Naive thymus-derived CD4-positive, alpha-beta T cell (primary cell): ENCODE measurements at regions of chr2 and their contacts with region 1.

Region 1: GRCh38 chr2:197434541-197435513 is at the start of gene SF3B1:
- DNase-seq: peak; percentile 98 to 99 (median 99)
- ATAC-seq: peak; percentile 99
- H3K4me3 ChIP-seq: peak within 1 kb of the TSS; percentile 98
- H3K4me3 Mint-ChIP-seq: peak within 1 kb of the TSS; percentile 88 to 100 (median 98)
- H3K27ac ChIP-seq: peak within 1 kb of the TSS; percentile 98
- H3K27ac Mint-ChIP-seq: peak within 1 kb of the TSS; percentile 100
- H3K4me1 ChIP-seq: peaks cover 28 to 46% of the 10 kb centered on the region in 2 donors
- H3K4me1 Mint-ChIP-seq: peaks cover 34 to 60% (median 49%) of the 10 kb centered on the region in 7 donors
- H3K27me3 ChIP-seq: no peaks in the 10 kb centered on the region
- H3K27me3 Mint-ChIP-seq: peaks cover 0 to 3% (median 0%) of the 10 kb centered on the region in 5 donors
- total RNA-seq, gene SF3B1: 330 to 737 (median 528) TPM

Region 2: GRCh38 chr2:196468394-196468793 is 966.4 kb before region 1 on chr2:
- CTCF ChIA-PET with region 1: no interaction called
- POLR2A ChIA-PET with region 1: no interaction called
- intact Hi-C with region 1: no loop called
- DNase-seq: no peak
- ATAC-seq: no peak
- H3K4me3 ChIP-seq: no peak overlapping the region
- H3K4me3 Mint-ChIP-seq: no peak overlapping the region
- H3K27ac ChIP-seq: no peak overlapping the region
- H3K27ac Mint-ChIP-seq: no peak overlapping the region
- H3K4me1 ChIP-seq: no peaks in the 10 kb centered on the region
- H3K4me1 Mint-ChIP-seq: no peaks in the 10 kb centered on the region
- H3K27me3 ChIP-seq: no peaks in the 10 kb centered on the region
- H3K27me3 Mint-ChIP-seq: peaks cover 12 to 40% (median 22%) of the 10 kb centered on the region in 5 donors

Region 3: GRCh38 chr2:196798980-196799379 is 635.8 kb before region 1 on chr2:
- CTCF ChIA-PET with region 1: no interaction called
- POLR2A ChIA-PET with region 1: no interaction called
- intact Hi-C with region 1: loop called in 1 of 2 experiments (anchors 1 kb)
- DNase-seq: peak in 1 of 9 donors; percentile 1
- ATAC-seq: peak; percentile 1
- H3K4me3 ChIP-seq: peak overlapping the region; percentile 98
- H3K4me3 Mint-ChIP-seq: peak overlapping the region; percentile 85 to 99 (median 96)
- H3K27ac ChIP-seq: peak overlapping the region; percentile 73
- H3K27ac Mint-ChIP-seq: peak overlapping the region; percentile 89 to 99 (median 91)
- H3K4me1 ChIP-seq: peaks cover 4 to 6% of the 10 kb centered on the region in 2 donors
- H3K4me1 Mint-ChIP-seq: peaks cover 17 to 52% (median 38%) of the 10 kb centered on the region in 7 donors
- H3K27me3 ChIP-seq: no peaks in the 10 kb centered on the region
- H3K27me3 Mint-ChIP-seq: peaks cover 0 to 4% (median 4%) of the 10 kb centered on the region in 5 donors

Region 4: DNA sequence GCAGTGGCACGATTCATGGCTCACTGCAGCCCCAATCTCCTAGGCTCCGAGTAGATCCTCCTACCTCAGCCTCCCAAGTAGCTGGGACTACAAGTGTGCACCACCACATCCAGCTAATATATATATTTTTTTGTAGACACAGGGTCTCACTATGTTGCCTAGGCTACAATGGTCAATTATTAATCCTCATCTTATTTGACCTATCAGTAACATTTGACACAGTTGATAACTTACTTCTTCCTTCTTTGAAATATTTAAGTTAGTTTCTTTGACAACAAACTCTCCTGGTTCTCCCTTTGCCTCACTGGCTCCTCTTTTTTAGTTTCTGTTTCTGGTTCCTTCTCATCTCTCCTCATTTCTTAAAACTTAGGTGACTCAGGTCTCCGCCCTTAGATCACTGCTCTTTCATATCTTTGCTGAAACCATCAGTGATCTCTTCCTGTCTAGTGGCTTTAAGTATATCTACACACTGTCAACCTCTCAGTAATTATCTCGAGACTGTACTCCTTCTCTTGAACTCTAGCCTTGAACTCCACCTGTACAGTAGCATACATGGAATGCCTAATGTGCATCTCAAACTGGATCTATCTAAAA is 519.9 kb before region 1 on chr2:
- CTCF ChIA-PET with region 1: no interaction called
- POLR2A ChIA-PET with region 1: no interaction called
- intact Hi-C with region 1: loop called in 1 of 2 experiments (anchors 5 kb)
- DNase-seq: peak in 7 of 9 donors; percentile 39 to 67 (median 54)
- ATAC-seq: peak; percentile 97
- H3K4me3 ChIP-seq: peak overlapping the region; percentile 32
- H3K4me3 Mint-ChIP-seq: peak overlapping the region; percentile 6 to 84 (median 66)
- H3K27ac ChIP-seq: peak overlapping the region; percentile 51
- H3K27ac Mint-ChIP-seq: peak overlapping the region; percentile 75 to 97 (median 87)
- H3K4me1 ChIP-seq: peaks cover 16 to 19% of the 10 kb centered on the region in 2 donors
- H3K4me1 Mint-ChIP-seq: peaks cover 11 to 47% (median 26%) of the 10 kb centered on the region in 7 donors
- H3K27me3 ChIP-seq: no peaks in the 10 kb centered on the region
- H3K27me3 Mint-ChIP-seq: no peaks in the 10 kb centered on the region

Region 5: DNA sequence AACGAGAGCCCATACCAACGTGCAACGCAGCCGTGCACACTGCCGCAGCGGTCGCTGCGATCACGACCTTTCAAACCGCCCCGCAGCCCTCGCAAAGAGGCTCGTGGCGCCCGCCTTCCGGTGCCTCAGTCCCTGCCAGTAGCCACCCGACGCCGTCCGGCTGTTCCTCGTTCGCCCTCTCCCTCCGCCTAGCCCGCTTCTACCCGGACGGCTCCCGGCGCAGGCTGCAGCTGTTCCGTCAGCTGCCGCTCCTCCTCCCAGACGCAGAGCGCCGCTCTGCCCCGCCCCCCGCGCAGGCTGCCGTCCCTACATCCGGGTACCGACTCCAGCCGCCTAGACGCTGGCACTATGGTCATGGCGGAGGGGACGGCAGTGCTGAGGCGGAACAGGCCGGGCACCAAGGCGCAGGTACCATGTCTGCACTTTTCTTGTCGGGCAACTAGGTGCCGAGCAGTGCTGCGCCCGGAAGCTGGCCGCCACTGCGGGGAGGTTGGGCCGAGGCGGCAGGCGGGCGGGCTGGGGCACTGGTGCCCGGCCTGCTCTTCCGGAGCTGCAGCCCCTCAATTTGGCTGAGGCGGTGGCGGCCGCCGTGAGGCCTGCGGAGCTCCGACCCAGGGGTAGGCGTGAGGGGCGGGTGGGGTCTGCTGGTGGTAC is 81.0 kb after region 1 on chr2 and contains the start of gene MOB4:
- CTCF ChIA-PET with region 1: no interaction called
- POLR2A ChIA-PET with region 1: interaction called, 20 read pairs
- intact Hi-C with region 1: loop called (anchors 1 kb)
- DNase-seq: peak; percentile 87 to 98 (median 92)
- ATAC-seq: peak; percentile 97
- H3K4me3 ChIP-seq: peak within 1 kb of the TSS; percentile 75
- H3K4me3 Mint-ChIP-seq: peak within 1 kb of the TSS; percentile 85 to 99 (median 98)
- H3K27ac ChIP-seq: peak within 1 kb of the TSS; percentile 86
- H3K27ac Mint-ChIP-seq: peak within 1 kb of the TSS; percentile 88 to 99 (median 95)
- H3K4me1 ChIP-seq: peaks cover 10 to 12% of the 10 kb centered on the region in 2 donors
- H3K4me1 Mint-ChIP-seq: peaks cover 28 to 49% (median 40%) of the 10 kb centered on the region in 7 donors
- H3K27me3 ChIP-seq: no peaks in the 10 kb centered on the region
- H3K27me3 Mint-ChIP-seq: no peaks in the 10 kb centered on the region
- total RNA-seq, gene MOB4: 16.1 to 22.5 (median 17.9) TPM

Region 6: DNA sequence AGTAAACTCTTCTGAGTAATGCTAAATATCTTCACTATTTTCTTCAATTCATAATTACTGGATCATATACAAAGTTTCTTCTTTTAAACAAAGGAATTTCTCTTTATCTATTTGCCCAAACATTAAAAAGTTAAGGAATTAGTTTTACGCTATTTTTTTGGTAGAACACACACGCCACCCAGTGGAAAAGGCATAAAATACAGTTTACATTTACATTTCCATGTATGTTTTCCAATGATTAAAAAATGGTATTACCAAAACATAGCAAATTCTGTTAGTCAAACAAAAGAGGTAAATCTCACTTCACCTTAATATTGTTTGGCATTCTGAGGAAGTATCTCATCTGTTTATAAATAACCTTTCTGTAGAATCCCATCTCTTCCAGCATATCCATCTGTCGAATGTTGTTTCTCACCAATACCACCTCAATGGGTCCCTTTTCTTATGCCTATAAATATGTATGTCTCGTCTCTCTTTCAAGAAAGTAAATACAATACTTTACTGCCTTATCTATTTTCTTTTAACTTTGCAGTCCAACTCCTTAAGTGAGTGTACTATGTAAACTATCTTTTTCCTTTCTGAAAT is 343.1 kb after region 1 on chr2:
- CTCF ChIA-PET with region 1: no interaction called
- POLR2A ChIA-PET with region 1: no interaction called
- intact Hi-C with region 1: loop called (anchors 5 kb)
- DNase-seq: peak in 5 of 9 donors; percentile 30 to 50 (median 37)
- ATAC-seq: no peak
- H3K4me3 ChIP-seq: no peak overlapping the region
- H3K4me3 Mint-ChIP-seq: no peak overlapping the region
- H3K27ac ChIP-seq: no peak overlapping the region
- H3K27ac Mint-ChIP-seq: no peak overlapping the region
- H3K4me1 ChIP-seq: no peaks in the 10 kb centered on the region
- H3K4me1 Mint-ChIP-seq: peaks cover 0 to 6% (median 0%) of the 10 kb centered on the region in 7 donors
- H3K27me3 ChIP-seq: no peaks in the 10 kb centered on the region
- H3K27me3 Mint-ChIP-seq: peaks cover 4 to 26% (median 9%) of the 10 kb centered on the region in 5 donors

Region 7: DNA sequence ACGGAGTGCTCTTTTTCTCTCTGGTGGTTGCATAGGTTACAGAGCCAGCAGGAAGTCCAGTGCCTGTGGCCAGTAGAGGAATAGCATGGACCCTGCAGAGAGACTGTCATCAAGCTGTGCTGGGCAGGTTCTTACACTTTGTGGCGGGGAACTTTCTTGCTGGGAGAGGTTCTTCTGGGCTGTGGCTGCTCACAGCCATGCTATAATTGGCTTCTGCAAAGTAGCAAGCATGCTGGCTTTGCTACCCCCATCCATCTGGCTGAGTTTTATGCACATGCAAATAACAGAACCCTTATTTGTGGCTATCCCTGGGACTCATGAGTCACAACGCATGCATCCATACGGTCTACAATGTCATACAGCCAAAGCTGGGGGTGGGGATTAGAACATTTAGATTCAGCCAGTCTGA is 438.5 kb after region 1 on chr2:
- CTCF ChIA-PET with region 1: no interaction called
- POLR2A ChIA-PET with region 1: no interaction called
- intact Hi-C with region 1: loop called in 1 of 2 experiments (anchors 10 kb)
- DNase-seq: no peak
- ATAC-seq: no peak
- H3K4me3 ChIP-seq: no peak overlapping the region
- H3K4me3 Mint-ChIP-seq: peak overlapping the region in 1 of 10 donors; percentile 33
- H3K27ac ChIP-seq: no peak overlapping the region
- H3K27ac Mint-ChIP-seq: peak overlapping the region in 3 of 9 donors; percentile 28 to 62 (median 47)
- H3K4me1 ChIP-seq: peaks cover 0 to 34% of the 10 kb centered on the region in 2 donors
- H3K4me1 Mint-ChIP-seq: peaks cover 29 to 92% (median 85%) of the 10 kb centered on the region in 7 donors
- H3K27me3 ChIP-seq: no peaks in the 10 kb centered on the region
- H3K27me3 Mint-ChIP-seq: no peaks in the 10 kb centered on the region